Transverse colon (tissue), 4 donors: ENCODE measurements at regions of chr17 and their contacts with region 1.

Region 1: DNA sequence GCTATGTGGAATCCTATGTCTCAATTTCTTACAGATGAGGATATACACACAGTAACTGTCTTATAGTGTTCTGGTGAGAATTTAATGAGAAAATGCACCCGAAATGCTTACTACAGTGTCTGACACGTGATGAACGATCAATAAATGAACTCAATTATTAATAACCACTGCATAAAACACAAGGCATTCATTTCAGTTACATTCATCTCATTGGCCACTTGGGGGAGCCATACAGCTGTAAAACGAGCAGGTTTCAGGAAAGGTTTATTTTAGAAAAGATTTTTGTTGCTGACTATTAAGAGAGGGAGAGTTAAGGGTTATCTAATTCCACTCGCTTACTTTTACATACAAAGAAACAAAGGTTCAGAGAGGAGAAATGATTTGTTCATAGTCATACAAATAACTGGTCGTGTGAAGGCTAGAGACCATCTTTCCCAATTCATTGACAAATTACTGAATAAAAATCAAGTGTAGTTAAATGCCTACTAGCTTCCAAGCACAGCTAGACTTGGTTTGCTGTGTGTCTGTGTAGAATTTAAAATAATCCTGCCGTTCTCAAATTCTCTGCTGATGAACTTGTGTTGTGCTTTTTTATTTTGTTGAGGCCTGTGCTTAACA is 160.1 kb downstream of the MAP2K4 start:
- DNase-seq: peak; percentile 11
- H3K4me3 ChIP-seq: no peak overlapping the region
- H3K27ac ChIP-seq: peak overlapping the region in 3 of 4 donors; percentile 9 to 49 (median 39)
- H3K4me1 ChIP-seq: no peaks in the 10 kb centered on the region
- H3K27me3 ChIP-seq: no peaks in the 10 kb centered on the region
- CTCF ChIP-seq: peak; percentile 62 to 73 (median 66)
- EP300 ChIP-seq: no peak
- POLR2A ChIP-seq: no peak

Region 2: GRCh38 chr17:12730931-12731521 is 550.3 kb after region 1 on chr17:
- in situ Hi-C with region 1: loop called in 1 of 4 experiments (anchors 25 kb)
- intact Hi-C with region 1: loop called (anchors 10 kb)
- DNase-seq: peak; percentile 81
- H3K4me3 ChIP-seq: no peak overlapping the region
- H3K27ac ChIP-seq: peak overlapping the region; percentile 70 to 80 (median 76)
- H3K4me1 ChIP-seq: peaks cover 9 to 42% (median 30%) of the 10 kb centered on the region in 4 donors
- H3K27me3 ChIP-seq: no peaks in the 10 kb centered on the region
- CTCF ChIP-seq: no peak
- EP300 ChIP-seq: no peak
- POLR2A ChIP-seq: no peak

Region 3: GRCh38 chr17:13002766-13003451 is 822.2 kb after region 1 on chr17:
- in situ Hi-C with region 1: loop called in 2 of 4 experiments (anchors 25 kb)
- intact Hi-C with region 1: loop called (anchors 10 kb)
- DNase-seq: peak; percentile 80
- H3K4me3 ChIP-seq: no peak overlapping the region
- H3K27ac ChIP-seq: no peak overlapping the region
- H3K4me1 ChIP-seq: no peaks in the 10 kb centered on the region
- H3K27me3 ChIP-seq: no peaks in the 10 kb centered on the region
- CTCF ChIP-seq: peak; percentile 77 to 84 (median 81)
- EP300 ChIP-seq: no peak
- POLR2A ChIP-seq: no peak